GM12878 (cell line): ENCODE measurements at regions of chr11 and their contacts with region 1.

Region 1: DNA sequence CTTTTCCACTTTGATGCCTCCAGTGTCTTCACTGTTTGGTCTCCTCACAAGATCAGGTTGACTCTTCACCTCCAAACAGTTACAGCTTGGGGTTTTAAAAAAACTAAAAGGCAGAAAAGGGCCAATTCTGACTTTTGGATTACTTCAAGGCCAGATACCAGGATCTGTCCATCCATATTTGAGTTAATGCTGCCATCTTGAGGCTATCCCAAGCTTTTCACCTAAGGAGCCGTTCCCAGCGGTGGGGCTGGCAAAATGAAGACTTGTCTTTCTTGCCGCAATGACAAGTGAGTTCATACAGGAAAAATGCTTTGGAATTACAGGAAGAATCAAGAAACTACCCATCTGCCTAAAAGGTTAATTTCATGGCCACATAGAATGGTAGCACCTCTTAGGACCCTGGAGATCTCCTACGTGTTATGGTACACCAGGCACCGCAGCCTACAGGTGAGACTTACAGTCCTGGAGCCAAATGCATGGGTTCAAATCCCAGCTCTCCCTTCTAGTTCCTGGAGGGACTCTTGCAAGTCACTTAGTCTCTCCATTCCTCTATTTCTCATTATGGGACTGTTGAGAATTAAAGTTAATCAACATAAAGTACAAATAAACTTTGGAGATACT is 6.0 kb upstream of the OR5B21 start:
- DNase-seq: no peak
- ATAC-seq: peak; percentile 84
- H3K4me3 ChIP-seq: no peak overlapping the region
- H3K27ac ChIP-seq: no peak overlapping the region
- H3K4me1 ChIP-seq: no peaks in the 10 kb centered on the region
- H3K27me3 ChIP-seq: no peaks in the 10 kb centered on the region
- CTCF ChIP-seq: peak; percentile 46 to 68 (median 62); a peak in 5 of 6 replicates
- EP300 ChIP-seq: no peak
- POLR2A ChIP-seq: no peak
- RAD21 ChIP-seq: peak; percentile 89

Region 2: GRCh38 chr11:57815476-57815875 is 698.4 kb before region 1 on chr11:
- CTCF ChIA-PET with region 1: interaction called, 5 read pairs
- POLR2A ChIA-PET with region 1: no interaction called
- RAD21 ChIA-PET with region 1: interaction called, 4 read pairs
- SMC1A ChIA-PET with region 1: interaction called, 3 read pairs
- in situ Hi-C with region 1: loop called (anchors 25 kb)
- intact Hi-C with region 1: loop called (anchors 5 kb)
- DNase-seq: no peak
- ATAC-seq: peak; percentile 82
- H3K4me3 ChIP-seq: no peak overlapping the region
- H3K27ac ChIP-seq: peak overlapping the region; percentile 51
- H3K4me1 ChIP-seq: peaks cover 10% of the 10 kb centered on the region; the same call in 1 of the 2 replicates
- H3K27me3 ChIP-seq: no peaks in the 10 kb centered on the region
- CTCF ChIP-seq: no peak
- EP300 ChIP-seq: peak in 1 of 2 experiments; percentile 52; a peak in 1 of 4 replicates
- POLR2A ChIP-seq: no peak
- RAD21 ChIP-seq: no peak

Region 3: DNA sequence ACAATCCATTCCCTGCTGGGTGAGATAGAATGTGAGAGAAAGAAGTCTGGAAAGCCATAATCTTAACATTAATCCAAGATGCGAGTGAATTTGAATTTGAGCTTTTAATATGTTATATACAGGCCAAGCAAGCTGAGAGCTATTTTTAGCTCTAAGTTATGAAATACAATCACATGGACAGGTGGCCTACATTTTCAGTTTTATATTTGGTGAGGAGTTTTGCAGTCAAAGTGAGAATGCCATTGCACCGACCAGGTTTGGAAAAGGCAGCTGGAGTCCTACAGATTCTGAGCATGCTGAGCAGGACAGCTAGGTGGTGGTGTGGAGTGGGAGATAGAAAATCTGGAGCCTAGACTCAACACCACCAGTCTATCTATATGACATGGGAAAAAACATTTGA is 18.0 kb before region 1 on chr11:
- CTCF ChIA-PET with region 1: interaction called, 10 read pairs
- POLR2A ChIA-PET with region 1: interaction called, 5 read pairs
- RAD21 ChIA-PET with region 1: interaction called, 25 read pairs
- SMC1A ChIA-PET with region 1: interaction called, 92 read pairs
- in situ Hi-C with region 1: no loop called
- intact Hi-C with region 1: no loop called
- DNase-seq: no peak
- ATAC-seq: peak; percentile 63
- H3K4me3 ChIP-seq: no peak overlapping the region
- H3K27ac ChIP-seq: no peak overlapping the region
- H3K4me1 ChIP-seq: peaks cover 9% of the 10 kb centered on the region; the same call in 1 of the 2 replicates
- H3K27me3 ChIP-seq: no peaks in the 10 kb centered on the region
- CTCF ChIP-seq: peak in 1 of 3 experiments; percentile 15; a peak in 2 of 6 replicates
- EP300 ChIP-seq: no peak
- POLR2A ChIP-seq: no peak
- RAD21 ChIP-seq: no peak

Region 4: DNA sequence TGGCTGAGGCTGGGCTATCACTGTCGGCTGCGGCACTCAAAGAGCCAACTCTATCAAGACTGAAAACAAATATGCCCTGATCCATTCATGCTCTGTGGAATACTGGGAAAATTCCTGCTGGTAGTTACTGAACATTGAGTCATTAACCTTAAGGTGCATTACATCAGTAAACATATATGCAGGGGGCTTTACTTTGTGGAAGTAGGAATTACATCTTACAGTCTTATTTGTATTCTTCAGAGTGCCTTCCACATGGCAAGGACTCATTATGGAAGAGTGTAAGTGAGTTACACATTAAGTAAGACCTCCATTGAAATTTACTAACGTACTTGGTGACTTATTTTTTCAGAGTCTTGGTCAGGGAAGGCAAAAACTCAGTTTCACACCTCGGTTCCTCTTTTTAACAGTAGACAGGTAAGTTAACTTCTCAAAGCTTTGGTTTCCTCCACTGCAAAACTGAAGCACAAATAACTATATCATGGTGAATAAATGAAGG is 10.4 kb before region 1 on chr11:
- CTCF ChIA-PET with region 1: interaction called, 23 read pairs
- POLR2A ChIA-PET with region 1: no interaction called
- RAD21 ChIA-PET with region 1: interaction called, 4 read pairs
- SMC1A ChIA-PET with region 1: interaction called, 98 read pairs
- in situ Hi-C with region 1: no loop called
- intact Hi-C with region 1: no loop called
- DNase-seq: peak; percentile 51
- ATAC-seq: peak; percentile 91
- H3K4me3 ChIP-seq: no peak overlapping the region
- H3K27ac ChIP-seq: no peak overlapping the region
- H3K4me1 ChIP-seq: peaks cover 6% of the 10 kb centered on the region; the same call in 1 of the 2 replicates
- H3K27me3 ChIP-seq: no peaks in the 10 kb centered on the region
- CTCF ChIP-seq: no peak
- EP300 ChIP-seq: peak in 1 of 2 experiments; percentile 84; a peak in 2 of 4 replicates
- POLR2A ChIP-seq: no peak
- RAD21 ChIP-seq: no peak